ENCODE measurements at regions of chr4 and their contacts with region 1.

Region 1: GRCh38 chr4:7101692-7102515 is 34.0 kb upstream of the GRPEL1 start:
- DNase-seq: peak; percentile 66
- ATAC-seq: peak; percentile 51
- H3K4me3 ChIP-seq: peak overlapping the region in 4 of 5 experiments; percentile 15 to 84 (median 72)
- H3K4me3 Mint-ChIP-seq: peak overlapping the region; percentile 91
- H3K27ac ChIP-seq: no peak overlapping the region
- H3K27ac Mint-ChIP-seq: peak overlapping the region; percentile 61
- H3K4me1 ChIP-seq: peaks cover 21 to 25% of the 10 kb centered on the region in 2 donors
- H3K4me1 Mint-ChIP-seq: peaks cover 19% of the 10 kb centered on the region
- H3K27me3 ChIP-seq: peaks cover 0 to 9% (median under 1%) of the 10 kb centered on the region in 4 experiments
- H3K27me3 Mint-ChIP-seq: peaks cover 12% of the 10 kb centered on the region
- CTCF ChIP-seq: peak; percentile 74

Region 2: GRCh38 chr4:6574747-6575502 is 527.0 kb before region 1 on chr4 and contains the start of gene MAN2B2:
- CTCF ChIA-PET with region 1: no interaction called
- POLR2A ChIA-PET with region 1: interaction called, 4 read pairs
- intact Hi-C with region 1: loop called (anchors 10 kb)
- DNase-seq: peak; percentile 82
- ATAC-seq: peak; percentile 96
- H3K4me3 ChIP-seq: peak within 1 kb of the TSS; percentile 67 to 92 (median 82)
- H3K4me3 Mint-ChIP-seq: peak within 1 kb of the TSS; percentile 90
- H3K27ac ChIP-seq: peak within 1 kb of the TSS; percentile 64 to 83
- H3K27ac Mint-ChIP-seq: peak within 1 kb of the TSS; percentile 89
- H3K4me1 ChIP-seq: peaks cover 9 to 19% of the 10 kb centered on the region in 2 donors
- H3K4me1 Mint-ChIP-seq: peaks cover 16% of the 10 kb centered on the region
- H3K27me3 ChIP-seq: peaks cover 0 to 2% (median 0%) of the 10 kb centered on the region in 4 experiments
- H3K27me3 Mint-ChIP-seq: no peaks in the 10 kb centered on the region
- CTCF ChIP-seq: no peak
- total RNA-seq, gene MAN2B2: 37.0 TPM in 2 replicates

Region 3: DNA sequence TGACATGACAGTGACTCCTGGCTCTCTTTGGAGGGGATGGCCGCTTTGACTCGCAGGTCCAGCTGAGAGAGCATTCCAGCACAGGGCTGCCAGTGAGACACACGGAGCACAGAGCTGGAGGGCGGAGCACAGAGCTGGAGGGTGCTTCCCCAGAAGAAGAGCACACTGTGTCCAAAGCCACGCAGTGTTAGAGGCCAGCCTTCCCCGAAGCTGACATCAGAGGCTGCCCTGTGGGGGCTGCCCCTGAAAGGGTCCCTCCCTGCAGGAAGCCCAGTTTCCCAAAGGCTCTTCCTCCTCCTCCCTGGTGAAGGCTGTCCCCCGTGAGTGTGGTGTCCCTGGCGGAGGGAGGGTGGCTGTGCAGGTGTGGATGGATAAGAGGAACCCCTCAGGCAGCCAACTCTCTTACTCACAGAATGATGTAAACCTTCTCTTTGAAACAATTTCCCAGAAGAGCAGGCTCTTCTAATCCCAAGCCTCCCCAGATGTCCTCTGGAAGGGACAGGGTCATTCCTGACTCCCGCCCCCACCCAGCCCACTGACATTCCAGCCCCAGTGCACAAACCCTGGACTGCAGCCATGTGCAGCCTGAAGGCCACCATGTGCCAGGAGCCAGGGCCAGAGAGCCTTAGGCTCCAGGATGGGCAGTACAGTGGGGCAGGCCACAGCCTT is 279.5 kb after region 1 on chr4:
- CTCF ChIA-PET with region 1: no interaction called
- POLR2A ChIA-PET with region 1: no interaction called
- intact Hi-C with region 1: no loop called
- DNase-seq: no peak
- ATAC-seq: no peak
- H3K4me3 ChIP-seq: no peak overlapping the region
- H3K4me3 Mint-ChIP-seq: no peak overlapping the region
- H3K27ac ChIP-seq: no peak overlapping the region
- H3K27ac Mint-ChIP-seq: no peak overlapping the region
- H3K4me1 ChIP-seq: no peaks in the 10 kb centered on the region
- H3K4me1 Mint-ChIP-seq: no peaks in the 10 kb centered on the region
- H3K27me3 ChIP-seq: peaks cover 0 to 6% (median 0%) of the 10 kb centered on the region in 4 experiments
- H3K27me3 Mint-ChIP-seq: peaks cover 4% of the 10 kb centered on the region
- CTCF ChIP-seq: no peak